ENCODE measurements at regions of chr4 and their contacts with region 1.

Region 1: DNA sequence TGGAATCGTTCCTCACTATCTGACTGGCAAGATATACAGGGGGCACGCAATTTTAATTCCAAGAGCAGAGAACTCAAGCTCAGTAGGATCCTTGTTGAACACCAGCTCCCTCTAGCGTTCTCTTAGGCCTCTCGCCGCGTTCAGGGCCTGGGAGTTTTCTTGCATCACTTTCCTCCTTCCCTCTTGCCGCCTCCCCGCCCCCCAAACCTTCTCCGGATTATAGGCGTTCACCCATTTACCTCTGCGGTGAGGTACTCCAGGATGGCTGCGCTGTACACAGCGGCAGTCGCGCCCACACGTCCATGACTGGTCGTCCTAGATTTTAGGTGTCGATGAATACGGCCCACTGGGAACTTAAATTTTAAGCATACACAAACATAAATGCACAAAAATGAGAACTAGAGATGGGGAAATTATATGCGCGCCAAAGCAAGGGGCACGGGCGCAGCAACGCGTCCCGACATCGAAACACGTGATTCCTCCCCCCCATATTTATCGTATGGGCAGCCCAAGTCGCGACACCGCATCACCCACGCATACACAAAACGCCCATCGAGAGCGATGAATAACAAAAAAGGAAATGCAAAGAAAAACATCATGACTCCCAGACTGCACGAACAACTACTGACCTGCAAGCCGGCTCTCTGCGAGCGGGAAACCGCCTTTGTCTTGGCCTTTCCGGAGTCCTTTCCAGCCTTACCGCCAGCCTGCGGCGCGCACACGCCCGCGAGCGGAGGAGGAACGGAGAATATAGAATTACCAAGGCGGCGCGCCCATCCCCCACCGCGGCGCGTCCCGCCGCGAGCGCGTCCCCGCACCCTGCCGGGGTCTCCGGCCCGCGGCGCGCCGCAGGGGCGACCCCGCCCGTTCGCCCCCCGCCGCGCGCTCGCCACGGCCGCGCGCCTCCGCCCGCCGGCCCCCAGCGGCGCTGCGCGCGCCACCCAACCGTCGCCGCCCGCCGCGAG is 759 bp downstream of the H2AZ1 start:
- DNase-seq: peak; percentile 95
- H3K4me3 ChIP-seq: peak overlapping the region; percentile 77 to 90 (median 88)
- H3K27ac ChIP-seq: peak overlapping the region; percentile 87
- H3K4me1 ChIP-seq: peaks cover 31% of the 10 kb centered on the region
- H3K27me3 ChIP-seq: no peaks in the 10 kb centered on the region
- CTCF ChIP-seq: peak; percentile 89 to 94

Region 2: GRCh38 chr4:99563310-99564186 is 385.8 kb before region 1 on chr4 and contains the start of gene TRMT10A:
- CTCF ChIA-PET with region 1: no interaction called
- dilution Hi-C with region 1: no loop called
- in situ Hi-C with region 1: no loop called
- intact Hi-C with region 1: loop called (anchors 1 kb)
- DNase-seq: peak; percentile 97
- H3K4me3 ChIP-seq: peak within 1 kb of the TSS; percentile 66 to 74 (median 67)
- H3K27ac ChIP-seq: peak within 1 kb of the TSS; percentile 95
- H3K4me1 ChIP-seq: no peaks in the 10 kb centered on the region
- H3K27me3 ChIP-seq: no peaks in the 10 kb centered on the region
- CTCF ChIP-seq: no peak
- total RNA-seq, gene TRMT10A: 4.0 to 9.1 TPM

Region 3: GRCh38 chr4:99816545-99817308 is 132.6 kb before region 1 on chr4 and contains the start of gene DAPP1:
- CTCF ChIA-PET with region 1: no interaction called
- dilution Hi-C with region 1: no loop called
- in situ Hi-C with region 1: loop called in 1 of 2 experiments (anchors 5 kb)
- intact Hi-C with region 1: loop called (anchors 1 kb)
- DNase-seq: peak; percentile 99
- H3K4me3 ChIP-seq: peak within 1 kb of the TSS; percentile 61 to 68 (median 68)
- H3K27ac ChIP-seq: peak within 1 kb of the TSS; percentile 94
- H3K4me1 ChIP-seq: peaks cover 43% of the 10 kb centered on the region
- H3K27me3 ChIP-seq: no peaks in the 10 kb centered on the region
- CTCF ChIP-seq: no peak
- total RNA-seq, gene DAPP1: 14.5 to 54.8 TPM

Region 4: DNA sequence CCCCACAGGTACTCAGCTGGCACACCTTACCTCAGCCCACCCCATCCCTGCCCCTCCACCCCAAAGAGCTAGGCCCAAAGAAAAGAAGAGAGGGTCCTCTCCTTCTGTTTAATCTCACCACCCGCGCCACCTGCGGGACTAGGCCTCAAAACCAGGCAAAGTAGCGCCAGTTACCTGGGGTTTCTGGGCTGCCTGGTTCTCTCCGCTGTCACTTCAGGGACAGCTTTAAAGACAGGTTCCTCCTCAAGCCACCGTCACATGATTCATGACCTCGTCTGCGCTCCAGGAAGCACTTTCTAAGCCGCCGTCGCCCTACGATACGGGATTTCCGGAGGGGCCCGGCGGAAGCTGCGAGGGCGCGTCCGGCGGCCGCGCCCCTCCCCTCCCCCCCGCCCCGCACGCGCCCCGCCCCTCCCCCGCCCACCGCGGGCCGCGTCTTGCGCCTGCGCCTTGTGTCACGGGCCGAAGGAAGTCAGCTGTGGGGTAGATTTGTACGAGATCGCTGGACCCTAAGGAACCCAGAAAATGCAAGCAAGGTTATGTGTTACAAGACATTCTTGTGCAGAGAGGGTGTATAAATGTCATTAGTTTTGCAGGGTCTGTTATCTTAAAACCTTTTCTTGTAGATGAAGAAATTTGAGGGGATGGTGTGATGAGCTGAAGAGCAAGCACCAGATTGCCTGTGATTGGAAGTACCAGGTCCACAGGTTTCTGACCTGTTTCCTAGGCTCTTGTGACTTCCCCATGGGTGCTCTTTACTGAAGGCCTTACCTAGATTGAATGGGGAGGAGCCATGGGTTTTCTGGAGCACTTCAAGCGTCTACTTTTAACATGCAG is 54.9 kb before region 1 on chr4 and contains the start of gene LAMTOR3:
- CTCF ChIA-PET with region 1: no interaction called
- dilution Hi-C with region 1: no loop called
- in situ Hi-C with region 1: no loop called
- intact Hi-C with region 1: loop called (anchors 1 kb)
- DNase-seq: peak; percentile 86
- H3K4me3 ChIP-seq: peak within 1 kb of the TSS; percentile 70 to 94 (median 75)
- H3K27ac ChIP-seq: peak within 1 kb of the TSS; percentile 84
- H3K4me1 ChIP-seq: peaks cover 10% of the 10 kb centered on the region
- H3K27me3 ChIP-seq: no peaks in the 10 kb centered on the region
- CTCF ChIP-seq: no peak
- total RNA-seq, gene LAMTOR3: 32.5 to 66.2 TPM

Region 5: DNA sequence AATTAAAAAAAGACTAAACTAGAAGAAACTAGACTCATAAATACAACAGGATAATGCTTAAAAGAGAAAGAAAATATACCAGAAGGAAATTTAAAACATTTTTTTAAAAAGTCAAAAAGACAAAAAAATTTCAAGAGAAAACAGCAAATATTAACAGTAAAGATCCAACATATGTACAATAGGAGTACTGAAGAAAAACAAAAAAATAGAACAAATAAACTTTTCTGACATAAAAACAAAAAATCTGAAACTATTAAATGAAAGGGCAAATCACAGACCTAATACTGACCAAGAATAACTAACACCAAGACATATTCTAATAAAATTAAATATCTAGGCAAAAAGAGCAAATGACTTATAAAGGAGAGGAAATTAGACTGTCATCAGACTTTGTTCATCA is 14.4 kb before region 1 on chr4:
- CTCF ChIA-PET with region 1: no interaction called
- dilution Hi-C with region 1: no loop called
- in situ Hi-C with region 1: no loop called
- intact Hi-C with region 1: no loop called
- DNase-seq: no peak
- H3K4me3 ChIP-seq: no peak overlapping the region
- H3K27ac ChIP-seq: no peak overlapping the region
- H3K4me1 ChIP-seq: no peaks in the 10 kb centered on the region
- H3K27me3 ChIP-seq: no peaks in the 10 kb centered on the region
- CTCF ChIP-seq: no peak

Region 6: GRCh38 chr4:100060765-100061416 is 111.6 kb after region 1 on chr4:
- CTCF ChIA-PET with region 1: no interaction called
- dilution Hi-C with region 1: no loop called
- in situ Hi-C with region 1: no loop called
- intact Hi-C with region 1: loop called (anchors 1 kb)
- DNase-seq: no peak
- H3K4me3 ChIP-seq: no peak overlapping the region
- H3K27ac ChIP-seq: no peak overlapping the region
- H3K4me1 ChIP-seq: no peaks in the 10 kb centered on the region
- H3K27me3 ChIP-seq: no peaks in the 10 kb centered on the region
- CTCF ChIP-seq: no peak